Naive thymus-derived CD8-positive, alpha-beta T cell (primary cell): ENCODE measurements at regions of chr7 and their contacts with region 1.

Region 1: GRCh38 chr7:44748045-44748947 is at the start of gene ZMIZ2:
- DNase-seq: peak; percentile 81 to 99 (median 93)
- ATAC-seq: peak; percentile 82 to 85
- H3K4me3 Mint-ChIP-seq: peak within 1 kb of the TSS; percentile 80 to 95 (median 87)
- H3K27ac Mint-ChIP-seq: peak within 1 kb of the TSS; percentile 85 to 97 (median 90)
- H3K4me1 Mint-ChIP-seq: peaks cover 29 to 45% (median 40%) of the 10 kb centered on the region in 4 donors
- H3K27me3 Mint-ChIP-seq: no peaks in the 10 kb centered on the region
- polyA plus RNA-seq, gene ZMIZ2: 2.6 to 8.1 (median 4.9) TPM

Region 2: GRCh38 chr7:44784364-44784763 is 36.1 kb after region 1 on chr7:
- POLR2A ChIA-PET with region 1: no interaction called
- DNase-seq: no peak
- ATAC-seq: no peak
- H3K4me3 Mint-ChIP-seq: no peak overlapping the region
- H3K27ac Mint-ChIP-seq: no peak overlapping the region
- H3K4me1 Mint-ChIP-seq: peaks cover 0 to 7% (median 1%) of the 10 kb centered on the region in 4 donors
- H3K27me3 Mint-ChIP-seq: peaks cover 0 to 4% (median 0%) of the 10 kb centered on the region in 5 donors

Region 3: GRCh38 chr7:44797329-44798251 is 49.3 kb after region 1 on chr7:
- POLR2A ChIA-PET with region 1: interaction called, 17 read pairs
- DNase-seq: peak; percentile 70 to 92 (median 80)
- ATAC-seq: peak; percentile 48 to 59
- H3K4me3 Mint-ChIP-seq: peak overlapping the region; percentile 87 to 100 (median 95)
- H3K27ac Mint-ChIP-seq: peak overlapping the region; percentile 90 to 99 (median 98)
- H3K4me1 Mint-ChIP-seq: peaks cover 15 to 47% (median 45%) of the 10 kb centered on the region in 4 donors
- H3K27me3 Mint-ChIP-seq: no peaks in the 10 kb centered on the region